Activated CD4-positive, alpha-beta memory T cell treated with anti-CD3 and anti-CD28 coated beads, Interleukin-2, amount 10 ng/mL, durations not matched to agents 7 days and 5 days (primary cell): ENCODE measurements at regions of chr11 and their contacts with region 1.

Region 1: DNA sequence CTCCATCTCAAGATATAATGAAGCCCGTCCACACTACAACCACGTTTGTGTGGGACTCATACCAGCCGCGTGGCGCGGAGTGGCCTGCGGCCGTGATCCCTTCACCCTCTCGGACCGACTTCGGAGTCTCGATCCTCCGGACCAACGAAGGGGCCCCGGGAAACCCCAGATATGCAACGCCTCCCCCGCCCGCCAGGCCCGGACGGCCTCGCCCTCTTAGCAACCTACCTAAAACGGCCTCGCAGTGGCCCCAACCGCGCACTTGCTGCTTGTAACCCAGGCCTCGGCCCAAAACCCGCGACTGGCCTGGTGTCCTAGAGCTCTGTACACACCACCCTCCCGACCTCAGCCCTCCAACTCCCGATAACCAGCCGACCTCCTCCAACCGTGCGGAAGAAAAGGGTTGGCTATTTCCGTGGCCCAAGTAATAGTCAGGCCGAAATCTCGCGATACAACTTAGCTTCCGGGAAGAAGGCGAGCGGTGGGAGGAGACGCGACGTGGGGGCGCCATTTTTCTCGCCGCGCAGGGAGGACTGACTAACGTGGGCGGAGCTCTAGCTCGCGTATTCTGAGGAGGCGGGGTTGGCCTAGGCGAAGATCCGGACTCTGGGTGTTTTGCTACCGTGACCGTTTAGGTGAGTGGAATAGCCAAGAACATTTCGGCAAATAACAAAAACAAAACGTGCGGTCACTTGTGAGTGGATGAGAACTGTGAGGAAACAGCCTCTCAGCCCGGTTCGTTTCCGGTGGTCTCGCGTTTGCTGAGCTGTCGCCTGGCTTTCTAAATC is at the starts of genes C11orf54 and TAF1D:
- DNase-seq: peak; percentile 98
- H3K4me3 Mint-ChIP-seq: peak within 1 kb of the TSS; percentile 99
- H3K27ac Mint-ChIP-seq: peak within 1 kb of the TSS; percentile 98
- H3K4me1 Mint-ChIP-seq: peaks cover 50% of the 10 kb centered on the region
- H3K27me3 Mint-ChIP-seq: no peaks in the 10 kb centered on the region
- total RNA-seq, gene C11orf54: 24.4 to 24.6 TPM
- total RNA-seq, gene TAF1D: 183 to 184 TPM

Region 2: DNA sequence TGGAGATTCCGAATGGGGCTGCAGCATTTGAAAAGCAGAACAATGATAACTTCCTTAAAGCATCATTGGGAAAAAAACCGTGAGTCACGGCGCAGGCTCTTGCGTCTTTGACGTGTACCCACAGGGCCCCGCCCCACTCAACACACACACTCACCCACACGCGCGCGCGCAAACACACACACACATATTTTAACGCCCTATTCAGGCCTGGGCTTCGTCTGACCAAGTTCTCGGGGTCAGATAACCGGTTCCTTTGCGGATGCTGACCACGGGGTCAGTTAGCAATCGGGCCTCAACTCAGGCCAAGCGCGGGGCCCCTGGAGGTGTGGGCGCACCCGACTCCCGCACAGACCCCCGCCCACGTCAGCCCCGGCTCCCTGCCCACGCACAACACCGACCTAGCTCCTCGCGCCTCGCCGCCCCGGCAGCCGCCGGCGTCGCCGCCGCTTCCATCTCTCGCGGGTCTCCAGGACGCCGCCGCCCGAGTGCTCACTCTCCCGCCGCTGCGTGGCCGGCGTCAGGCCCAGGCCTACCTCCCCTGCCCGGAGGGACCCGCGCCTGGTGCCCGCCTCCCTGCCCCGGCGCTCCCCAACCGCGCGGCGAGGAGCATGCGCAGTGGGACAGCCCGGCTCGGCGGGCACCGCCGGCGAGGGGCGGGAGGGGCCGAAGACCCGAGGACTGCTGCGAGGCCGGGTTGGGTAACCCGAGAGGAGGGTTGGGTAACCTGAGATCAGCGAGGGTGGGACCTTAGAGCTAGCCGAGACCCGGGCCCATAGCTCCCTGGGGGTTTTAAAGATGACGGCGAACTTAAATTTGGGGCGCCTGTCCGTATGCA is 543.7 kb before region 1 on chr11 and contains the start of gene SLC36A4:
- CTCF ChIA-PET with region 1: interaction called, 3 read pairs
- POLR2A ChIA-PET with region 1: interaction called, 12 read pairs
- DNase-seq: peak; percentile 88
- H3K4me3 Mint-ChIP-seq: peak within 1 kb of the TSS; percentile 87
- H3K27ac Mint-ChIP-seq: peak within 1 kb of the TSS; percentile 83
- H3K4me1 Mint-ChIP-seq: peaks cover 23% of the 10 kb centered on the region
- H3K27me3 Mint-ChIP-seq: peaks cover 9% of the 10 kb centered on the region
- total RNA-seq, gene SLC36A4: 10.7 to 13.5 TPM

Region 3: GRCh38 chr11:93662177-93662575 is 79.1 kb before region 1 on chr11:
- CTCF ChIA-PET with region 1: interaction called, 4 read pairs
- POLR2A ChIA-PET with region 1: interaction called, 36 read pairs
- DNase-seq: no peak
- H3K4me3 Mint-ChIP-seq: peak overlapping the region; percentile 87
- H3K27ac Mint-ChIP-seq: peak overlapping the region; percentile 84
- H3K4me1 Mint-ChIP-seq: peaks cover 54% of the 10 kb centered on the region
- H3K27me3 Mint-ChIP-seq: no peaks in the 10 kb centered on the region

Region 4: DNA sequence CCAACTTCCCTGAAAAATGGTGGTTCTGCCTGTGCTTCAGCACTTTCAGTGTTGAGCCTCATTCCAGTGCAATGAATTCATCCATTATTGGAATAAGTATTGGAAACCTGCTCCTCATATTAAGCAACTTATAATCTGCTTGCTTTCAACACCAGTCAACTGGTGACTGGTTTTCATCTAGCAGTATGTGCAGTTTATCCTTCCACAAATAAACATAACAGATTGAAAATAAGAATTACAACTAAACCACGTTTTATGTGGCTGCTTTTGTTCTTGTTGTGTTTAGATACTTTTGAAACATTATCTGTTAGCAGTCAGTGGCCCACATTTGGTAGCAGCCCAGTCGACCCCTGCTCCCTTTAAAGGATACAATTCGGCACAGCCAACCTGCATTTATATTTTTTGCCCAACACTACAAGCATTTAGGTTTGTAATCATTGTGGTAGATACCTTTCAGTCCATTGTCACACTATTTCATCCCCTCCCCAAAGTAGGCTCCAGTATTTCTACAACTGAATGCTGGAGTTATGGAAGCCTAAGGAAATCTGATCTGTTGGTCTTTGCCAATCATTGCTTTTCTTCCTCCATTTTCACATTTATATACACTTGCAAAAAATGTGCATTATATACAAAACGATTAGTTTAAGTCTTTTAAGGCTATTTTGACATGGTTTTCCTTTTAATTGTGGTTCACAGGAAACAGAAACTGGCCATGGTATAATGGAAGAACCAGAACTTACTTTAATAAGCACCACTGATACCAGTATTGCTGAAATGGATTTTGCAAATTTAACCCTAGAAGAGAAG is 13.1 kb before region 1 on chr11:
- CTCF ChIA-PET with region 1: interaction called, 13 read pairs
- POLR2A ChIA-PET with region 1: interaction called, 74 read pairs
- DNase-seq: no peak
- H3K4me3 Mint-ChIP-seq: no peak overlapping the region
- H3K27ac Mint-ChIP-seq: no peak overlapping the region
- H3K4me1 Mint-ChIP-seq: peaks cover 25% of the 10 kb centered on the region
- H3K27me3 Mint-ChIP-seq: no peaks in the 10 kb centered on the region

Region 5: GRCh38 chr11:93784152-93784934 is 43.1 kb after region 1 on chr11 and contains the start of gene MED17:
- CTCF ChIA-PET with region 1: interaction called, 47 read pairs
- POLR2A ChIA-PET with region 1: interaction called, 325 read pairs
- DNase-seq: peak; percentile 91
- H3K4me3 Mint-ChIP-seq: peak within 1 kb of the TSS; percentile 97
- H3K27ac Mint-ChIP-seq: peak within 1 kb of the TSS; percentile 90
- H3K4me1 Mint-ChIP-seq: peaks cover 50% of the 10 kb centered on the region
- H3K27me3 Mint-ChIP-seq: no peaks in the 10 kb centered on the region
- total RNA-seq, gene MED17: 40.6 to 42.9 TPM

Region 6: DNA sequence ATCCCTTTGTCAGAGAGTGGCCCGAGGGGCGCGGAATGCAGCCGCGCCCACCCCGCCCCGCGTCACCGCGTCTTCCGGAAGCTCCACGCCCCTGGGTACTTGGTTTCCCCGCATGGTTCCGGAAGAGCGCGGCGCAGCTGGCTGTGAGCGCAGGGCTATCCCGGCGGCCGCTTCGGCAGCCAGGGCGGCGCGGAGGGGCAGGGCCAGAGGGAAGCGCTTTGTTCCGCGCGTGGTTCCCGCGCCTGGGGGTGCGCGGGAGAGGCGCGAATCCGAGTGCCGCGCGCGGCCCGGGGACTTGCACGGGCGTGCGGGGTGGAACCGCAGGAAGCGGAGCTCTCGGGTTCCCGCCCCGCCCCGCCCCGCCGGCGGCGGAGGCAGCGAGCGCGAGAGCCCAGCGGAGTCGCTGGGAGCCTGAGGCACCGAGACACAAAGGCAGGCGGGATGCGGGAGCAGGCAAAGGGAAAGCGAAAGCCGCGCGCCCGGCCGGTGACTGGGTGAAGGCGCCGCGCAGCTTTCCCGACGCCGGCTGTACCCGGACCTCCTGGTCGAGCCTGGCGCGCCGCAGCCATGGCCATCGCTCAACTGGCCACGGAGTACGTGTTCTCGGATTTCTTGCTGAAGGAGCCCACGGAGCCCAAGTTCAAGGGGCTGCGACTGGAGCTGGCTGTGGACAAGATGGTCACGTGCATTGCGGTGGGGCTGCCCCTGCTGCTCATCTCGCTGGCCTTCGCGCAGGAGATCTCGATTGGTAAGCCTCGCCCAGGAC is 387.6 kb after region 1 on chr11 and contains the start of gene PANX1:
- CTCF ChIA-PET with region 1: no interaction called
- POLR2A ChIA-PET with region 1: interaction called, 26 read pairs
- DNase-seq: peak; percentile 77
- H3K4me3 Mint-ChIP-seq: no peak within 1 kb of the TSS
- H3K27ac Mint-ChIP-seq: no peak within 1 kb of the TSS
- H3K4me1 Mint-ChIP-seq: peaks cover 22% of the 10 kb centered on the region
- H3K27me3 Mint-ChIP-seq: no peaks in the 10 kb centered on the region
- total RNA-seq, gene PANX1: 13.7 to 13.9 TPM